CD4-positive, alpha-beta memory T cell (primary cell): ENCODE measurements at regions of chr13 and their contacts with region 1.

Region 1: GRCh38 chr13:42048682-42049453 is 420 bp downstream of the DGKH start:
- DNase-seq: peak; percentile 51 to 71 (median 57)
- H3K4me3 ChIP-seq: peak overlapping the region; percentile 45 to 76
- H3K4me3 Mint-ChIP-seq: peak overlapping the region; percentile 82 to 93 (median 89)
- H3K27ac ChIP-seq: peak overlapping the region; percentile 53
- H3K27ac Mint-ChIP-seq: peak overlapping the region in 4 of 7 donors; percentile 61 to 88 (median 74)
- H3K4me1 ChIP-seq: peaks cover 12% of the 10 kb centered on the region
- H3K4me1 Mint-ChIP-seq: peaks cover 17 to 25% (median 19%) of the 10 kb centered on the region in 4 donors
- H3K27me3 ChIP-seq: no peaks in the 10 kb centered on the region
- H3K27me3 Mint-ChIP-seq: no peaks in the 10 kb centered on the region

Region 2: DNA sequence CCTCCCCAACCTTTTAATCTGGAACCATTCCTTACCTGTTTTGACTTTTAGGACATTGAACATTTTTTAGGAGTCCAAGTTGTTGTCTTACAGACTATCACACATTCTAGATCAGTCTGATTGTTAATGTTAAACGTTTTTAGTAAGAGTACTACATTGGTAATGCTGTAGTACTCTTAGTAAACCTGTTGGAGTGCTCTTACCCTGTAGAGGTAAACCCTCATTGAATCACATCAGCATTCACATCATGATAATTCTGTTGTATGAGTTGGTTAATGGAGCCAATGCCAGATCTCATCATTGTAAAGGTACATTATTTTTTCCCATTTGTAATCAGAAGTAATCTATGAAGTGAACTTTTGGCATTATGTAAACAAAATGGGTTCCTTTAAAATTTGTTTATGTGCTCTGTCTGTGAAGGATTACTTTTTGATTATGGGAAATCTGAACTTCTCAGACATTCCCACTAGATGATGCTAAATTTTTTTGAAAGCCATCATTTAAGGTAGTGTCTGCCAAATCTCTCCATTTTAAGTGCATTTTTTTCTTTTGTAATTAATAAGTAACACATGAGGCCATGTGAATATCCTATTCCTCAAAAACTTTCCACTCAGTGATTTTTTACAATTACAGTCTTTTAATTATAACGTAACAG is 143.1 kb before region 1 on chr13:
- CTCF ChIA-PET with region 1: no interaction called
- POLR2A ChIA-PET with region 1: no interaction called
- intact Hi-C with region 1: loop called (anchors 1 kb)
- DNase-seq: peak in 4 of 5 donors; percentile 37 to 46 (median 44)
- H3K4me3 ChIP-seq: no peak overlapping the region
- H3K4me3 Mint-ChIP-seq: no peak overlapping the region
- H3K27ac ChIP-seq: no peak overlapping the region
- H3K27ac Mint-ChIP-seq: peak overlapping the region in 1 of 7 donors; percentile 65
- H3K4me1 ChIP-seq: no peaks in the 10 kb centered on the region
- H3K4me1 Mint-ChIP-seq: peaks cover 4 to 12% (median 7%) of the 10 kb centered on the region in 4 donors
- H3K27me3 ChIP-seq: no peaks in the 10 kb centered on the region
- H3K27me3 Mint-ChIP-seq: no peaks in the 10 kb centered on the region